Activated CD4-positive, alpha-beta T cell treated with anti-CD3 and anti-CD28 coated beads, Interleukin-2, amount 10 ng/mL, durations not matched to agents 24 days and 14 days (primary cell): ENCODE measurements at regions of chr18 and their contacts with region 1.

Region 1: DNA sequence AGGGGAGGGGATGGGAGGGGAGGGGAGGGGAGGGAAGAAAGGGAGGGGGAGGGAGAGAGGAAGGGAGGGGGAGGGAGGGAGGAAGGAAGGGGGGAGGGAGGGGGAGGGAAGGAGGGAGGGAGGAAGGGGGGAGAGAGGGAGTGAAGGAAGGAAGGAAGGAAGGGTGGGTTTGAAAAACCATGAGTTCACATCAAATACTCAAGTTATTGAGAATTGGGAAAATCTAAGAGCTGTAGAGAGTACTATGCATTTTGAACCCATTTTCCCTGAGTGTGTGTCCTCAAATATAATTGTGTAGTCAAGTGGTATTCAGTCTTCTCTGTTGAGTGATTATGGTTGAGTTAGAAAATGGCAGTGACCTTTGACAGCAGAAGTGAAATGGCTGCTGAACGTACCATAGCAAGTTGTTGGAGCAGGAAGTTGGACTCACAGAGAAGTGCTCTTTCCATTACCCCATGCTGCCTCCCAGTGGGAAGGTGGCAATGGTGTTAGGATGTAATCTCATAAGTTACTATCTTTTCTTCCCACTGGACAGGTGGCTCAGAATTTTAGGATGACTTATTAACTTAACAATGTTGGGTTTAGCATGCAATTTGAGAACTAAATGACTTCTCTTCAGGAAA is 214.6 kb downstream of the SETBP1 start:
- DNase-seq: peak; percentile 73
- H3K4me3 Mint-ChIP-seq: no peak overlapping the region
- H3K27ac Mint-ChIP-seq: peak overlapping the region; percentile 53
- H3K4me1 Mint-ChIP-seq: peaks cover 41% of the 10 kb centered on the region
- H3K27me3 Mint-ChIP-seq: peaks cover 6% of the 10 kb centered on the region

Region 2: DNA sequence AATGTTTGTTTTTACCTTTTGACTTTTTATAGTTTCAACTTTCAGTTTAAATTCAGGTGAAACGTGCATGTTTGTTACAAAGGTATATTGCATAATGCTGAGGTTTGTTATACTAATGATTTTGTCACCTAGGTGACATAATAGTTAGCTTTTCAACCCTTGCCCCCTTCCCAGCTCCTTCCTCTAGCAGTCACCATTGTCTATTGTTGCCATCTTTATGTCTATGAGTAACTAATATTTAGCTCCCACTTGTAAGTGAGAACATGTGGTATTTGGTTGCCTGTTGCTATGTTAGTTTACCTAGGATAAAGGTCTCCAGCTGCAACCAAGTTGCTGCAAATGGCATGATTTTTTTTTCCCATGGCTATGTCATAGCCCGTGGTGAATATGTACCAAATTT is 536.9 kb before region 1 on chr18:
- intact Hi-C with region 1: loop called (anchors 10 kb)
- DNase-seq: no peak
- H3K4me3 Mint-ChIP-seq: no peak overlapping the region
- H3K27ac Mint-ChIP-seq: no peak overlapping the region
- H3K4me1 Mint-ChIP-seq: no peaks in the 10 kb centered on the region
- H3K27me3 Mint-ChIP-seq: no peaks in the 10 kb centered on the region